Left lung (tissue), 14 donors: ENCODE measurements at regions of chr1 and their contacts with region 1.

Region 1: DNA sequence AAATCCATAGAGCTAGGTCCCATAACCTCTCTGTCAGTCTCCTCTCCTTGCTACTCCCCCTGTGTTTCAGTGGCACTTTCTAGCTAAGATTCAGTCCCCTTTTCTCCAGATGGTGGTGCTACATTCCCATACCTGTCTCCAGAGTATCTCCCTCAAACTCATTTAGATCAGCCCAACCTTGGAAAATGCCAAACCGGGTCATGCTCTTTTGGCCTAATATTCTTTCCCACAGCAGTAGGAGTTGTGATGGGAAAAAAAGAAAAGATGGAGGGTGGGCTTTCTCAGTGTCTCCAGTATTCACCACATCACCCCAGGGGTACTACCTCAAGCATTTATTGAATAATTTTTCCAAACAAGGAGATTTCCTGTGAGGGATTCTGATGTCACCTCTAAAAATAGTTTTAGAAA is 3.2 kb upstream of the RXFP4 start:
- DNase-seq: peak in 2 of 4 donors; percentile 43 to 75
- ATAC-seq: peak; percentile 13
- H3K4me3 ChIP-seq: no peak overlapping the region
- H3K27ac ChIP-seq: peak overlapping the region in 1 of 2 donors; percentile 27
- H3K4me1 ChIP-seq: peaks cover 22 to 68% of the 10 kb centered on the region in 2 donors
- H3K27me3 ChIP-seq: no peaks in the 10 kb centered on the region
- CTCF ChIP-seq: peak; percentile 39 to 52

Region 2: DNA sequence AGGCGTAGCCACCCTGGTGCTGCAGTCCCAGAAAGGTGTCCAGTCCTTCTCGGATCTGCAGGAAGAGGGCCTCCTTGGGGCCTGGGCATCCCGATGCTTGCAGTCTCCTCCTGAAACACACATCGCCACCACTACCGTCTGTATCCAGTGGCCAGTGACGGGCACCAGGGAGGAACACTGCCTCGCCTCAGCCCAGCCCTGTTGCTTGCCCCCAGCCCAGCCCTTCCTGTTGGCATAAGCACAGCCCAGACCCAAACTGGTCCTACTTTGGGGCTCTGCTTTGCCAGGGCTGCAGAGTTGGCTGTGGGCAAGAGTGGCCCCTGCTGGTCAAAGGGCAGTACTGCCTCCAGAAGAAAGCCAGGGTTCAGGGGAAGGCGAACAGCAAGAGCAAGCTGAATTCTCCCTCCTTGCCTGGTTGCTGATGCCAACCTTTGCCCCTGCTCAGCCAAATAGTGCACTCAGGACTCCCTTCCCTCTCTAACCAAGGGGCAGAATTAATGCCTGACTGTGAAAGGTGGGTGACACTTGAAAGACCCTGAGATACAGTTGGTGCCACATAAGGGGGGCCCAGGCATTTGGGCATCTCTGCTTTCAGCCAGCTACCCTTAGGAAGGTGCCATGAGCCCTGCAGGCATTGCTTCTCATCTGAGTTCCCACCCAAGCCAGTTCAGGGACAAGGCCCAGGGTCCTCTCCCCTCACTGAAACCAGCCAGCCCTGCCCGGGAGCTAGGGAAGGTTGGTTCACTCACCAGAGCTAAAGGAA is 51.2 kb after region 1 on chr1:
- intact Hi-C with region 1: loop called in 1 of 2 experiments (anchors 5 kb)
- DNase-seq: peak in 3 of 4 donors; percentile 81 to 91 (median 82)
- ATAC-seq: peak; percentile 86
- H3K4me3 ChIP-seq: peak overlapping the region; percentile 2 to 35
- H3K27ac ChIP-seq: peak overlapping the region; percentile 3 to 88
- H3K4me1 ChIP-seq: peaks cover 6 to 45% of the 10 kb centered on the region in 2 donors
- H3K27me3 ChIP-seq: no peaks in the 10 kb centered on the region
- CTCF ChIP-seq: peak; percentile 95 to 100

Region 3: GRCh38 chr1:156062189-156062588 is 124.0 kb after region 1 on chr1:
- intact Hi-C with region 1: no loop called
- DNase-seq: no peak
- ATAC-seq: peak; percentile 42
- H3K4me3 ChIP-seq: peak overlapping the region; percentile 22 to 47
- H3K27ac ChIP-seq: no peak overlapping the region
- H3K4me1 ChIP-seq: peaks cover 0 to 5% of the 10 kb centered on the region in 2 donors
- H3K27me3 ChIP-seq: no peaks in the 10 kb centered on the region
- CTCF ChIP-seq: no peak

Region 4: DNA sequence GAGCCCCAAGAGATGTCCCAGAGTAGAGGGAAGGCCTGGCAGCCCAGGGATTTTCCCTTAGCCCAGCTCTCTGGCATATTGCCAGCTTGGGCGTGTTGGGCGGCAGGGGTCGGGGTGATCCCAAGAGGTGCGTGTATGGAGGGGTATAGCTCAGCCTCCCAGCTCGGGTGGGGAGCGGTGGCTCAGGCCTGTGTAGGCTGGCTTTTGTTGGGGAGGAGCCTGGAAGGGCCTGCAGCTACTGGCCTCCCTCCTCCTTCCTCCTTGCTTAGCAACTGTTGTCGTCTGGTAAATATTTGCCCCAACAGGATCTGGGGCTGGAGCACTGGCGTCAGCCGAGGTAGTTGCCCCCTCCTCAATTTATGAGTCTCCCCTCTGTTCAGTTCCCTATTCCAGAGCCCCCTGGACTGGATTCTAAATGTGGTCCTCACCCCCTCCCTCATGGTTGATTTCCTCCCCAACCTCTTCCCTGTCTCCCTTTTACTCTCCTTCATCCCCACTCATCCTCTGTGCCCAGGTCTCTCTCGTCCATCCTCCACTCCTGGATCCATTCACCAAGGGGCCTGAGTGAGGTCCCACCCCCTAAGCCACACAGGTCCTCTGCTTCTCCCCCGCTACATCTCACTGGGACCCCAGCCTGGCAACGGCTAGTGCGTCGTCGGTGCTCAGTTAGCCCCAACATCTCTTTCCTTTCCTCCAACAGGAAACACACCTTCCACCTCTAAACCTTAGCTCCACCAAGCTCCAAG is 166.0 kb after region 1 on chr1:
- intact Hi-C with region 1: no loop called
- DNase-seq: peak; percentile 85 to 96 (median 88)
- ATAC-seq: peak; percentile 75
- H3K4me3 ChIP-seq: no peak overlapping the region
- H3K27ac ChIP-seq: peak overlapping the region; percentile 93 to 94
- H3K4me1 ChIP-seq: peaks cover 39 to 67% of the 10 kb centered on the region in 2 donors
- H3K27me3 ChIP-seq: peaks cover 0 to 60% of the 10 kb centered on the region in 2 donors
- CTCF ChIP-seq: no peak